Ascending aorta (tissue), 2 donors: ENCODE measurements at regions of chr3 and their contacts with region 1.

Region 1: GRCh38 chr3:171809821-171810628 is at the start of gene PLD1:
- DNase-seq: peak; percentile 46 to 95
- H3K4me3 ChIP-seq: peak within 1 kb of the TSS; percentile 69 to 91
- H3K27ac ChIP-seq: peak within 1 kb of the TSS; percentile 82 to 93
- H3K4me1 ChIP-seq: peaks cover 5 to 7% of the 10 kb centered on the region in 2 donors
- H3K27me3 ChIP-seq: no peaks in the 10 kb centered on the region
- CTCF ChIP-seq: peak in 1 of 3 experiments; percentile 16
- total RNA-seq, gene PLD1: 8.8 TPM

Region 2: DNA sequence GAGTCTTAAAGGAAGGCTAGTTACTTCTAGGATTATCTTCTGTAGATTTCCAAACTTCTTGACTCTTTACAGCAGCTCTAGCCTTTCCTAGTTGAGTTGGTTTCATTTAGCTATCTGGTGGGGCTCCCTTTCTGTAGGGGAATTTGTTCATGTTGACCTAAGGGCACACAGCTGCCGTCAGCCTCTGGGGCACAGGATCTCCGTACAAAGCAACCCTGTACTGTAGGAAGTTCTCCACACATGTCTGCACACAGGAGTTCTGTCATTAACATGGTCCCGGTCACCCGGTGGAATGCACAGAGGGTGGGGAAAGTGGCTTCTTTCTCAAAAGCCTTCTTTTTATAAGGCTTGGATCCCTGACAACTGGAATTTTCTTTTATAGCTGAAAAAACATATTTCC is 261.1 kb before region 1 on chr3:
- intact Hi-C with region 1: no loop called
- DNase-seq: no peak
- H3K4me3 ChIP-seq: no peak overlapping the region
- H3K27ac ChIP-seq: no peak overlapping the region
- H3K4me1 ChIP-seq: no peaks in the 10 kb centered on the region
- H3K27me3 ChIP-seq: no peaks in the 10 kb centered on the region
- CTCF ChIP-seq: no peak

Region 3: GRCh38 chr3:171829841-171830517 is 20.0 kb after region 1 on chr3:
- intact Hi-C with region 1: loop called (anchors 2 kb)
- DNase-seq: peak in 1 of 2 donors; percentile 75
- H3K4me3 ChIP-seq: no peak overlapping the region
- H3K27ac ChIP-seq: peak overlapping the region in 1 of 2 donors; percentile 18
- H3K4me1 ChIP-seq: peaks cover 0 to 9% of the 10 kb centered on the region in 2 donors
- H3K27me3 ChIP-seq: no peaks in the 10 kb centered on the region
- CTCF ChIP-seq: peak; percentile 43 to 66 (median 59)

Region 4: DNA sequence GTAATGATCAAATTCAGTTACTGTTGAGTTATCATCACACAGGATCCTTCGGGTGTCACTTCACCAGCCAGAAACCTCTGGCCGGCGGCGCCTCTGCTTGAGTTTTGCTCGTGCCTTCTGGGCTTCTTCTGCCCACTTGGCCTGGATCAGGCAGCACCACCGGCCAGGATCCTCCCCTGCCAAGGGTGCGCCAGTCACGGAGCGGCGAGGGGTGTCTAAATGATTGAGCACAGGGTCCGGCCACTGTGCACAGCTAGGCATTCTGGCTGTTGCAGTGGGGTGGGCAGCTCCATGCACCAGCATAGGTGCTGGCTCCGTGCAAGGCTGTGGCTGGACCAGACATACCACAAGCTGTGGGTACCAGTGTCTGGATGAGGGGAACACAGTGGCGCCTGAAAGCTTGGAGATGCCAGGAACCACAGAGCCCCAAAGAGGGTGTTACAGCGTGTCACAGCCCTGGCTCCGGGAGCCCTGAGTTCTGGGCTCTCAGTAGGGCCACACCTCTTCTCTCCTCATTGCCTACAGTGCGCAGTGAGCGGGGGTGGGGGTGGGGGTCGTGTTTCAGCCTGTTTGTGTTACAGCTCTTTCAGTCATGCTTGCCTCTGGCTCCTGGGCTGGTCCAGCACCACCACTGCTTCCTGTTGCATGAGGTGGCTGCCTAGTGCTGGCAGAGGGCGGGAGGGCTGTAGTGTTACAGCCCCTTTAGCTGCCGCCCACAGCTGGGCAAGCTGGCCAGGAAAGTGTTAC is 398.7 kb after region 1 on chr3:
- intact Hi-C with region 1: loop called (anchors 5 kb)
- DNase-seq: peak; percentile 37 to 83
- H3K4me3 ChIP-seq: peak overlapping the region; percentile 3 to 51
- H3K27ac ChIP-seq: peak overlapping the region; percentile 89 to 95
- H3K4me1 ChIP-seq: peaks cover 21 to 74% of the 10 kb centered on the region in 2 donors
- H3K27me3 ChIP-seq: no peaks in the 10 kb centered on the region
- CTCF ChIP-seq: no peak

Region 5: GRCh38 chr3:172317984-172318383 is 508.0 kb after region 1 on chr3:
- intact Hi-C with region 1: loop called (anchors 5 kb)
- DNase-seq: peak in 1 of 2 donors; percentile 82
- H3K4me3 ChIP-seq: no peak overlapping the region
- H3K27ac ChIP-seq: peak overlapping the region; percentile 80 to 84
- H3K4me1 ChIP-seq: peaks cover 4 to 72% of the 10 kb centered on the region in 2 donors
- H3K27me3 ChIP-seq: no peaks in the 10 kb centered on the region
- CTCF ChIP-seq: no peak